ENCODE measurements at regions of chr2 and their contacts with region 1.

Region 1: DNA sequence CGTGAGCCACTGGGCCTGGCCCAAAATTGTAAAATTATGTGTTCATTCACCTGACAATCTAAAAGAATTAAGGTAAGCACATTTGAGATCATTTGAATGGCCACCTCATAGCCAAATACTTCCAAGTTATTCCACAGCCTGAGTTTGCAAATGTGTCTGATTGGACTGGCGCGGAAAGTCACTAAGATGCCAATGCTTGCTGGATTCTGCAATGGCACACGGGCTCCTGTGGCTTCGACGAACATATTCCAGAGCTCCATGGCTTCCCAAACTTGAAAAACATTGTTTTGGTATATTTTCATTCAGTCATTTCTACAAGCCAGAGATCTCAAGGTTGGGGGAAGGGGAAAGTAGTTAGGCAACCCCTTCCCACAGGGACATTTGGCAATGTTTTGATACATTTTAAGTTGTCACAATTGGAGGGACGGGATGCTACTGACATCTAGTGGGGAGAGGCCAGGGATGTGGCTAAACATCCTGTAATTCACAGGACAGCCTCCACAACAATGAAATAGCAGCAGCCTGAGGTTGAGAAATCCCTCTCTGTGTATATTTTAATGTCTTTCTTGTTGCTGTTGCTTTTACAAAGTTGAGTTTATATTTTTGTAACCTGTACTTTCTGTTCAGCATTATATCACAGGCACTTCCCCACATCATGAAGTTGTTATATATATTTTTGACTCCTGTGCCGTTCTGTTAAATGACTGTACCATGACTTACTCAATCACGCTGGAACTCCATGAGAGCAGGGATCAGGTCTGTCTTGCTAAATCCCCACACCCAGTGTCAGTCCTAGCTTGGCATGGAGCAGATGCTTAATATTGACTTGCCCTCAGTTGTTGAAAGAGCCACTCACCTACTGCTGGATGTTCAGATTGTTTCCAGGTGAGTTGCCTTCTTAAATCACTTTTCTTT is 56.9 kb downstream of the COL4A4 start:
- DNase-seq: peak in 6 of 10 donors; percentile 18 to 71 (median 45)
- H3K4me3 ChIP-seq: no peak overlapping the region
- H3K27ac ChIP-seq: no peak overlapping the region
- H3K27me3 ChIP-seq: peaks cover 0 to 6% (median 0%) of the 10 kb centered on the region in 45 donors
- CTCF ChIP-seq: peak in 55 of 56 donors; percentile 54 to 87 (median 70)

Region 2: GRCh38 chr2:225668606-225669266 is 1438.4 kb before region 1 on chr2:
- intact Hi-C with region 1: loop called (anchors 5 to 10 kb)
- DNase-seq: peak in 1 of 10 donors; percentile 11
- H3K4me3 ChIP-seq: no peak overlapping the region
- H3K27ac ChIP-seq: no peak overlapping the region
- H3K27me3 ChIP-seq: no peaks in the 10 kb centered on the region
- CTCF ChIP-seq: peak; percentile 54 to 86 (median 73)

Region 3: GRCh38 chr2:226813148-226813701 is 293.9 kb before region 1 on chr2:
- intact Hi-C with region 1: loop called (anchors 5 kb)
- DNase-seq: no peak
- H3K4me3 ChIP-seq: no peak overlapping the region
- H3K27ac ChIP-seq: no peak overlapping the region
- H3K27me3 ChIP-seq: no peaks in the 10 kb centered on the region
- CTCF ChIP-seq: peak in 55 of 56 donors; percentile 27 to 82 (median 59)

Region 4: DNA sequence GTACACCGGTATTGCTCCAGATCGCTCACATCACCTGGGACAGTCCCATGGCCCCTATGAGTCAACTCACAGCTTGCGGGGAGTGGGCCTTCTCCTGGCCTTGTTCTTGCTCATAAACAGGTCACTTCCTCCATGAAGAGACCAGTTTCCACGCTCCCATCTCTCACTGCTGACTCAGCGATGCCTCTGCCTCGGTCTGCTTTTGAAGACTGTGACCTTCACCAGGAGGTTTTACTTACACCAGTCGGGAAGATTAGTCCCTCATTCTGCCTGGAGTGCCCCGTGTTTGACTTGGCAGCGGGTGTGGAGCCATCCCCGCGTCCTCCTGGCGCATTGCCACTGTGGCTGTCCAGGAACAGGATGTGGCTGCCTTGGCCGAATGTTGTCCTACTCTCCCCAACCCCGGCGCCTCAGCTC is 111.5 kb before region 1 on chr2:
- intact Hi-C with region 1: loop called in 1 of 2 experiments (anchors 10 kb)
- DNase-seq: peak in 1 of 10 donors; percentile 47
- H3K4me3 ChIP-seq: no peak overlapping the region
- H3K27ac ChIP-seq: no peak overlapping the region
- H3K27me3 ChIP-seq: no peaks in the 10 kb centered on the region
- CTCF ChIP-seq: no peak